GM13976 (cell line): ENCODE measurements at regions of chr4 and their contacts with region 1.

Region 1: GRCh38 chr4:17810260-17811077 is at the starts of genes DCAF16 and NCAPG:
- DNase-seq: peak; percentile 96
- CTCF ChIP-seq: no peak

Region 2: DNA sequence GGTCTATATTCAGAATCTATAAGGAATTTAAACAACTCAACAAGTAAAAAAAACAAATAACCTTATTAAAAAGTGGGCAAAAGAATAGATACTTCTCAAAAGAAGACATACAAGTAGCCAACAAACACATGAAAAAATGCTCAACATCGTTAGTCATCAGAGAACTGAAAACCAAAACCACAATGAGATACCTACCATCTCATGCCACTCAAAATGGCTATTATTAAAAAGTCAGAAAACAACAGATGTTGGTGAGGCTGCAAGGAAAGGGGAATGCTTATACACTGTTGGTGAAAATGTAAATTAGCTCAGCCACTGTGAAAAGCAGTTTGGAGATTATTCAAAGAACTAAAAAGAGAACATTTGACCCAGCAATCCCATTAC is 500.2 kb before region 1 on chr4:
- in situ Hi-C with region 1: no loop called
- DNase-seq: no peak
- CTCF ChIP-seq: no peak

Region 3: GRCh38 chr4:17552427-17552826 is 258.0 kb before region 1 on chr4:
- in situ Hi-C with region 1: loop called (anchors 10 kb)
- DNase-seq: no peak
- CTCF ChIP-seq: no peak

Region 4: GRCh38 chr4:18366892-18367291 is 556.4 kb after region 1 on chr4:
- in situ Hi-C with region 1: loop called (anchors 25 kb)
- DNase-seq: no peak
- CTCF ChIP-seq: peak; percentile 69

Region 5: GRCh38 chr4:18593445-18594002 is 783.1 kb after region 1 on chr4:
- in situ Hi-C with region 1: loop called (anchors 25 kb)
- DNase-seq: peak; percentile 65
- CTCF ChIP-seq: peak; percentile 65